ENCODE measurements at regions of chr6 and their contacts with region 1.

Region 1: DNA sequence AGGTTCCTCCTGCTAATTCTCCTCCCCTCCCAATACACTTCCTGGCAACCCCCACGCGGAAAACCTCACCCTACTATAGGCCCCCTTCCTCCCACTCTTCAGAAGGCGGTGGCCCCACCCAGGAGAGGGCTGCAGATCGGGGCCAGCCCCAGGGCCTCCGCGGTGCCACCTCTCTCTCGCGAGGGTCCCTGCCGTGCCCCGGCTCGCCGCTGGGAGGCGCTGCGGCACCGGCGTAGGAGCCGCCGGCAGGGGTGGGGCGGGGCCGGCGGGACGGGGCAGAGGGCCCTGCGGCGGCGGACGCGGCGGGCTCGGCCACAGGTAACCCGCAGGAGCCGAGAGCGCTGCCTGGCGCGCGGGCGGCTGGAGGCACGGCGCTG is at the start of gene ANKRD6:
- DNase-seq: peak; percentile 65
- H3K4me3 Mint-ChIP-seq: peak within 1 kb of the TSS; percentile 68
- H3K27ac Mint-ChIP-seq: no peak within 1 kb of the TSS
- H3K4me1 Mint-ChIP-seq: no peaks in the 10 kb centered on the region
- H3K27me3 Mint-ChIP-seq: peaks cover 42% of the 10 kb centered on the region
- CTCF ChIP-seq: peak; percentile 94
- total RNA-seq, gene ANKRD6: 1.0 and 2.1 TPM in 2 replicates

Region 2: GRCh38 chr6:89412071-89413005 is 20.5 kb before region 1 on chr6 and contains the start of gene RRAGD:
- CTCF ChIA-PET with region 1: interaction called, 22 read pairs
- POLR2A ChIA-PET with region 1: interaction called, 4 read pairs
- intact Hi-C with region 1: no loop called
- DNase-seq: no peak
- H3K4me3 Mint-ChIP-seq: peak within 1 kb of the TSS; percentile 71
- H3K27ac Mint-ChIP-seq: no peak within 1 kb of the TSS
- H3K4me1 Mint-ChIP-seq: no peaks in the 10 kb centered on the region
- H3K27me3 Mint-ChIP-seq: peaks cover 25% of the 10 kb centered on the region
- CTCF ChIP-seq: no peak
- total RNA-seq, gene RRAGD: 0.33 and 0.49 TPM in 2 replicates

Region 3: DNA sequence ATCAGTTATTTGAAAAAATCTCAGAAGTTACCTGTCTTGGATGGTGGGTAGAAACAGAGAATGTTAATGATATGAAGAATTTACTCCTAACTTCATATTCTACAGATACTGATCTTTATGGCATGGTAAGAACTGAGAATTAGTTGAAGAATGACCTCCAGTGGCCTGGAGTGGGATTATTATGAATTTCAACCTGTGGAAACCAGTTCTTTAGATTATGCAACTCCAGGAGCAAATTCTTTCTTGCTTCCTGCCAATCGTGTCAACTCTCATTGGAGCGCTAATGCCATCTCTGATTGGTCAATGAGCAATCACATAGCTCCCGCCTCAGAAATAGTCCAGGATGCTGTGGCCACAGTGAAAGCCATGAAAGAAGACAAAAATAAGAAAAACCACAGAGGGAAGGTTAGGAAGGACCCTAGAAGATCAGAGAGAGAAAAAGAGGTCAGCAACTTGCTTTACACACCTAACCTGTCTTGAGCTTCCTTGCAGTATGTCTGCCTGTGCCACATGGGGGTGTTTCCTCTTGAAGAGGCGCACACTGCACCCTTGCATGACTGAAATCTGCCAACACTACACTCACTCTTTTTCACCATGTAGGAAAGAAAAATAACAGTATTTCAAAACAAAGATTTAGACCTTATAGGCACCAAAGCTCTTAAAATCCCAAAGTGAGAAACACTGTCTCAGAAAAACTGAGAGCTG is 165.3 kb after region 1 on chr6:
- CTCF ChIA-PET with region 1: interaction called, 25 read pairs
- POLR2A ChIA-PET with region 1: interaction called, 3 read pairs
- intact Hi-C with region 1: loop called (anchors 5 kb)
- DNase-seq: peak; percentile 76
- H3K4me3 Mint-ChIP-seq: peak overlapping the region; percentile 58
- H3K27ac Mint-ChIP-seq: no peak overlapping the region
- H3K4me1 Mint-ChIP-seq: peaks cover 6% of the 10 kb centered on the region
- H3K27me3 Mint-ChIP-seq: peaks cover 23% of the 10 kb centered on the region
- CTCF ChIP-seq: no peak

Region 4: DNA sequence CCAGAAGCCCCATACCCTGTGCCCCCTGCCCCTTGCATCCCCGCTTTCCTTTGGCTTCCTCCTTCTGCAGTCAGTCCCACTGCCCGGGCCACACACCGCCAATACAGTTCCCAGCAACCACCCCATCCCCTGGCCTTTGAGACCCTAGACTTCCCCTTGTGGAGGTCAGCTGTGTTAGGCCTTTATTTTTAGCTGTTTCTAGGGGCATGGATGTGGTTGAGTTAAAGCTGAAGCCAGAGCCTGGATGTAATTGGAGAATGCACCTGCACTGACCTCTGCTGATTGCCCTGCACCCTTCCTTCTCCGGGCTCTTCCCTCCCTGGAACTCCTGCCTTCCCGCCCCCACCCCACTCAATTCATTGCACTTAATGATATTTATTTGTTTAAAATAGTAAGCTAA is 171.8 kb after region 1 on chr6:
- CTCF ChIA-PET with region 1: interaction called, 93 read pairs
- POLR2A ChIA-PET with region 1: interaction called, 4 read pairs
- intact Hi-C with region 1: loop called (anchors 5 kb)
- DNase-seq: no peak
- H3K4me3 Mint-ChIP-seq: no peak overlapping the region
- H3K27ac Mint-ChIP-seq: no peak overlapping the region
- H3K4me1 Mint-ChIP-seq: no peaks in the 10 kb centered on the region
- H3K27me3 Mint-ChIP-seq: no peaks in the 10 kb centered on the region
- CTCF ChIP-seq: no peak

Region 5: GRCh38 chr6:89638320-89639195 is 205.7 kb after region 1 on chr6 and contains the start of gene LYRM2:
- CTCF ChIA-PET with region 1: interaction called, 15 read pairs
- POLR2A ChIA-PET with region 1: interaction called, 7 read pairs
- intact Hi-C with region 1: no loop called
- DNase-seq: peak; percentile 95
- H3K4me3 Mint-ChIP-seq: peak within 1 kb of the TSS; percentile 76
- H3K27ac Mint-ChIP-seq: peak within 1 kb of the TSS; percentile 92
- H3K4me1 Mint-ChIP-seq: peaks cover 16% of the 10 kb centered on the region
- H3K27me3 Mint-ChIP-seq: no peaks in the 10 kb centered on the region
- CTCF ChIP-seq: no peak
- total RNA-seq, gene LYRM2: 41.1 and 43.8 TPM in 2 replicates

Region 6: GRCh38 chr6:89934685-89935366 is 502.0 kb after region 1 on chr6:
- CTCF ChIA-PET with region 1: no interaction called
- POLR2A ChIA-PET with region 1: no interaction called
- intact Hi-C with region 1: loop called (anchors 10 kb)
- DNase-seq: no peak
- H3K4me3 Mint-ChIP-seq: no peak overlapping the region
- H3K27ac Mint-ChIP-seq: peak overlapping the region; percentile 49
- H3K4me1 Mint-ChIP-seq: no peaks in the 10 kb centered on the region
- H3K27me3 Mint-ChIP-seq: no peaks in the 10 kb centered on the region
- CTCF ChIP-seq: no peak